ENCODE measurements at regions of chr7 and their contacts with region 1.

Region 1: GRCh38 chr7:39465055-39465929 is 100.9 kb upstream of the YAE1 start:
- DNase-seq: peak; percentile 8
- H3K4me3 Mint-ChIP-seq: no peak overlapping the region
- H3K27ac Mint-ChIP-seq: no peak overlapping the region
- H3K4me1 Mint-ChIP-seq: peaks cover 18% of the 10 kb centered on the region
- H3K27me3 Mint-ChIP-seq: peaks cover 20% of the 10 kb centered on the region

Region 2: DNA sequence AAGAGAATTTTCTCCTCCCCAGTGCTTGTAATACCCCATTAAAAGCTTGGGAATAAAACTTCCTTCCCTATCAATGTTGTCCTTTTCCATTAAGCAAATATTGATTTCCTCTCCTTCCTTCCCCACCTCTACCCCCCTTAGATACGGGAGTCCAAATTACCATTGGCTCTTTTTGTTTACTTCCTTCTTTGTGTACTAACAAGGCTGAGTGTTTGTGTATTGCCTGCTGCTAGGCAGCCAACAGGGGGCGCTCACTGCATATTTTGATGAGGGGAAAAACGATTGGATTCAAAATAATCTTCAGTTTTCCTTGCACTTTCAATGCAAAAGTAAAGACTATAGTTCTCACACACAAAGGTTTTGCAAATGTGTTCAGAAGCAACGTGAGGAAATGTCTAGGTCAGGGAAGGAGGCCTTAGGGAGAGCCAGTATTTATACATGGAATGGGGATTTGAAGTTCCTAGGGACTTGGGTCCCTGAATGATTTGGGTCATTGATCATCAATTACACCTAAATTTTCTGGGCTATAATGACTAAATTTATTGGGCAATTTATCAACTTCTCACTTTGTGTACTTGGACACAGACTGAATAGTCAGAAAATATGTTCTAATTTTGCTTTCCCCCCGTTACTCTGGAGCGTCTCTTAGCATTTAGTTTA is 532.7 kb before region 1 on chr7:
- intact Hi-C with region 1: loop called (anchors 1 kb)
- DNase-seq: peak; percentile 15
- H3K4me3 Mint-ChIP-seq: no peak overlapping the region
- H3K27ac Mint-ChIP-seq: no peak overlapping the region
- H3K4me1 Mint-ChIP-seq: peaks cover 7% of the 10 kb centered on the region
- H3K27me3 Mint-ChIP-seq: peaks cover 7% of the 10 kb centered on the region

Region 3: GRCh38 chr7:39504963-39505362 is 39.7 kb after region 1 on chr7:
- intact Hi-C with region 1: no loop called
- DNase-seq: no peak
- H3K4me3 Mint-ChIP-seq: no peak overlapping the region
- H3K27ac Mint-ChIP-seq: no peak overlapping the region
- H3K4me1 Mint-ChIP-seq: peaks cover 8% of the 10 kb centered on the region
- H3K27me3 Mint-ChIP-seq: peaks cover 8% of the 10 kb centered on the region